IMR-90 (cell line): ENCODE measurements at regions of chr4 and their contacts with region 1.

Region 1: DNA sequence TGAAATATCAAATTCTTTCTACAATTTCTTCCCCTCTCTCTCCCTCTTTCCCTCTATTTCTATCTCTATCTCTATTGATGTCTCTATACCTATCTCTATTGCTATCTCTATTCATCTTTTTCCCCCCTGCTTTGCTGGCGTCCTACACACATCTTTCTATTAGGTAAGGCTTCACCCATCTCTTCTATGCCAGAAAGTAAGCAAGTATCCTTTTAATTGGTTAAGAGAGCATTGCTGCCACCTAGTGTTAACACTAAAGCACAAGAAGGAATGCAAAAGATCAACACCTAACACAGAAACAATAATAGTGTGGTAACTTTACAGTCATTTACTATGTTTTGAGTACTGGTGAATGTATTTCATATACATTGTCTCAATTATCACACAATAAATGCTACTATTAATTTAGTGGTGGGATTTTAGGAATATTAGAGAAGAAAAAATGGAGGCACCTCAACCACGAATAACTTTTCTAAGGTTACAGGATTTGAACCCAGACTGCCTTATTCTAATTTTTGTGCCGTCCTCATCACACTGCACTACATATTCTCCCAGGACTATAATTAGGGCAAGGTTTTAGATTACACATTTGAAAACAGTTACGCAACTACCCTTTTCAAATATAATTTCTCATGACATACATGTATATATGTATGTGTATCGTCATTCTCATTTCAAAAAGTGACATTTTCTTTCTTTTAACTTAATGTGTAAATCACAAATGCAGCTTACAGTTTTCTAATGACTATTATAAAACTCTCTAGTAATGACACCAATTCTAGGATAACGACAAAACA is 3.7 kb upstream of the C4orf36 start:
- DNase-seq: peak; percentile 77
- ATAC-seq: peak; percentile 38
- H3K4me3 ChIP-seq: no peak overlapping the region
- H3K27ac ChIP-seq: no peak overlapping the region
- H3K4me1 ChIP-seq: peaks cover 5% of the 10 kb centered on the region
- H3K27me3 ChIP-seq: no peaks in the 10 kb centered on the region
- CTCF ChIP-seq: peak; percentile 84
- POLR2A ChIP-seq: no peak
- RAD21 ChIP-seq: peak; percentile 87

Region 2: GRCh38 chr4:86522349-86522748 is 373.5 kb before region 1 on chr4:
- CTCF ChIA-PET with region 1: no interaction called
- POLR2A ChIA-PET with region 1: no interaction called
- dilution Hi-C with region 1: no loop called
- in situ Hi-C with region 1: no loop called
- intact Hi-C with region 1: loop called (anchors 1 kb)
- DNase-seq: no peak
- ATAC-seq: no peak
- H3K4me3 ChIP-seq: no peak overlapping the region
- H3K27ac ChIP-seq: no peak overlapping the region
- H3K4me1 ChIP-seq: no peaks in the 10 kb centered on the region
- H3K27me3 ChIP-seq: peaks cover 2% of the 10 kb centered on the region; the same call in 1 of the 2 replicates
- CTCF ChIP-seq: peak; percentile 39
- POLR2A ChIP-seq: no peak
- RAD21 ChIP-seq: peak; percentile 47

Region 3: GRCh38 chr4:86593688-86594558 is 302.0 kb before region 1 on chr4 and contains the start of gene PTPN13:
- CTCF ChIA-PET with region 1: no interaction called
- POLR2A ChIA-PET with region 1: no interaction called
- dilution Hi-C with region 1: no loop called
- in situ Hi-C with region 1: loop called (anchors 10 kb)
- intact Hi-C with region 1: loop called (anchors 1 kb)
- DNase-seq: peak; percentile 98
- ATAC-seq: peak; percentile 95
- H3K4me3 ChIP-seq: peak within 1 kb of the TSS; percentile 74
- H3K27ac ChIP-seq: peak within 1 kb of the TSS; percentile 89
- H3K4me1 ChIP-seq: peaks cover 2% of the 10 kb centered on the region
- H3K27me3 ChIP-seq: no peaks in the 10 kb centered on the region
- CTCF ChIP-seq: 0 out of 2 replicates have a peak, but pooled peaks have one; percentile 8
- POLR2A ChIP-seq: peak; percentile 86
- RAD21 ChIP-seq: no peak
- total RNA-seq, gene PTPN13: 29.0 and 31.4 TPM in 2 replicates

Region 4: DNA sequence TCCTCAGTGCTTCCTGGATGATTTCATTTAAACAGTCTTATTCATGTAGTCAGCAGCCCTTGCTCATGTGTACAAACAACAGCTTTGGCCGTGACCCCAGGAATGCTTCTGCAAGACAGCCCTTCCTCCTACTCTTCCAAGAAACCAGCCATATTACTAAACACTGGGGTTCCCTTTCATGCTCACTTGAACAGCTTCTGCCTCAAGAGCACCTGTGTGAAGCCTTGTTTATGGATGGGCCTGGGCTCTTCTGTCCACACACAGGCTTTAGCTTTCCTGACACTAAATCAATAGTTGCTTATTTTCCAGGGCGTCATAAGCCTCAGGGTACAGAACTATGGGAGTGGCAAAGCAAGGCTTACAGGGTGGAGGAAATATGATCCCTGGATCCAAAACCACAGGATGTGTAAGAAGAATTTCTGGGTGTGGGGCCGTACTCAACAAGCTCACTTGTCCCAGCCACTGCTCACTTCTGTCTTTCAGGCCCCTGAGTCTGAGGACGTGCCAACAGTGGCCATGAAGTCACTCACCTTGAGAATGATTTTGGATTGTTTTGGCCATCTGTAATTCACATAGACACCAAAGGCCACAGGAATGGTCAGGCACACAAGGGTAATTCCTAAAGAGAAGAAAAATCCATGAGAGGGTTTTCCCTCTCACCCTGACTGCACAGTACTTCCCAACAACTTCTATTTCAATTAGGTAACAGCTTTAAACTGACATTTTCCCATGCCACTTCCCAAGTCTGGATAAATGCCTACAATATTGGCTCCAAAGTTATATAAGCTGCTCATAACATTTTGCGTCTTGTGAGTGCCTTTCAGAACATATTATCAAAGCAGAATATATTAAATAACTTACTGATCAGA is 64.4 kb before region 1 on chr4:
- CTCF ChIA-PET with region 1: no interaction called
- POLR2A ChIA-PET with region 1: no interaction called
- dilution Hi-C with region 1: no loop called
- in situ Hi-C with region 1: no loop called
- intact Hi-C with region 1: loop called (anchors 5 kb)
- DNase-seq: peak; percentile 96
- ATAC-seq: peak; percentile 90
- H3K4me3 ChIP-seq: no peak overlapping the region
- H3K27ac ChIP-seq: peak overlapping the region; percentile 71
- H3K4me1 ChIP-seq: peaks cover 23% of the 10 kb centered on the region
- H3K27me3 ChIP-seq: no peaks in the 10 kb centered on the region
- CTCF ChIP-seq: no peak
- POLR2A ChIP-seq: no peak
- RAD21 ChIP-seq: no peak

Region 5: GRCh38 chr4:87243426-87244053 is 347.6 kb after region 1 on chr4:
- CTCF ChIA-PET with region 1: no interaction called
- POLR2A ChIA-PET with region 1: no interaction called
- dilution Hi-C with region 1: no loop called
- in situ Hi-C with region 1: no loop called
- intact Hi-C with region 1: no loop called
- DNase-seq: no peak
- ATAC-seq: no peak
- H3K4me3 ChIP-seq: no peak overlapping the region
- H3K27ac ChIP-seq: no peak overlapping the region
- H3K4me1 ChIP-seq: no peaks in the 10 kb centered on the region
- H3K27me3 ChIP-seq: no peaks in the 10 kb centered on the region
- CTCF ChIP-seq: no peak
- POLR2A ChIP-seq: no peak
- RAD21 ChIP-seq: no peak